BJ (cell line): ENCODE measurements at regions of chr9 and their contacts with region 1.

Region 1: DNA sequence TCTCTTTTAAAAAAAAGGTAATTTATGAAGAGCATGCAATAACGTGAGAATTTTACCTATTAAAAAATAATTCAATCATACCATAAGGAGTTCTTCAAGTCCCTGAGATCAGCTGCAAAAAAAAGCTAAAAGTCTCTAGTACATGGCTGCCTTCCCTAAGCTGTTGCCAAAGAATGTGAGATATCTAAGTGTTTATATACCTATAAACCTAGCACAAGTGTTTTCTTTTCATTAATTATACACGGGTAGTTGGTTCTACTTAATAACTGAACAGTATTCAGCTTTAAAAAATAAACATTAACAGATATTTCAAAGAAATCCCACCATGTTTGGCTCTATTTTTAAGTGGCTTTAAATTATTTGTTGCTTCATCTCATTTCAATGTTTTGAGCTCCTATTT is 25.9 kb downstream of the FNBP1 start:
- DNase-seq: no peak
- H3K4me3 ChIP-seq: no peak overlapping the region
- H3K27me3 ChIP-seq: no peaks in the 10 kb centered on the region
- CTCF ChIP-seq: no peak

Region 2: GRCh38 chr9:129934041-129934591 is 83.0 kb before region 1 on chr9:
- CTCF ChIA-PET with region 1: no interaction called
- POLR2A ChIA-PET with region 1: interaction called, 12 read pairs
- DNase-seq: no peak
- H3K4me3 ChIP-seq: no peak overlapping the region
- H3K27me3 ChIP-seq: no peaks in the 10 kb centered on the region
- CTCF ChIP-seq: no peak